ENCODE measurements at regions of chr3 and their contacts with region 1.

Region 1: GRCh38 chr3:52291508-52292181 is 4.0 kb downstream of the GLYCTK start:
- DNase-seq: peak; percentile 76
- CTCF ChIP-seq: peak; percentile 64

Region 2: GRCh38 chr3:52318186-52318816 is 26.7 kb after region 1 on chr3:
- CTCF ChIA-PET with region 1: interaction called, 10 read pairs
- POLR2A ChIA-PET with region 1: no interaction called
- DNase-seq: no peak
- CTCF ChIP-seq: no peak

Measured in GM10248 (cell line).